PC-9 (cell line): ENCODE measurements at regions of chr1 and their contacts with region 1.

Region 1: GRCh38 chr1:179129702-179130473 is 48.0 kb downstream of the TOR3A start:
- DNase-seq: no peak
- H3K4me3 ChIP-seq: no peak overlapping the region
- H3K27ac ChIP-seq: peak overlapping the region; percentile 99
- H3K4me1 ChIP-seq: peaks cover 35% of the 10 kb centered on the region
- H3K27me3 ChIP-seq: no peaks in the 10 kb centered on the region
- CTCF ChIP-seq: no peak

Region 2: GRCh38 chr1:179142889-179143299 is 13.0 kb after region 1 on chr1:
- CTCF ChIA-PET with region 1: no interaction called
- POLR2A ChIA-PET with region 1: no interaction called
- intact Hi-C with region 1: loop called (anchors 2 kb)
- DNase-seq: peak; percentile 41 to 93
- H3K4me3 ChIP-seq: peak overlapping the region; percentile 55
- H3K27ac ChIP-seq: peak overlapping the region; percentile 94
- H3K4me1 ChIP-seq: peaks cover 49% of the 10 kb centered on the region
- H3K27me3 ChIP-seq: no peaks in the 10 kb centered on the region
- CTCF ChIP-seq: no peak

Region 3: GRCh38 chr1:179164494-179164893 is 34.6 kb after region 1 on chr1:
- CTCF ChIA-PET with region 1: no interaction called
- POLR2A ChIA-PET with region 1: no interaction called
- intact Hi-C with region 1: loop called (anchors 2 kb)
- DNase-seq: peak in 1 of 2 experiments; percentile 83
- H3K4me3 ChIP-seq: no peak overlapping the region
- H3K27ac ChIP-seq: peak overlapping the region; percentile 71
- H3K4me1 ChIP-seq: peaks cover 20% of the 10 kb centered on the region
- H3K27me3 ChIP-seq: no peaks in the 10 kb centered on the region
- CTCF ChIP-seq: no peak

Region 4: DNA sequence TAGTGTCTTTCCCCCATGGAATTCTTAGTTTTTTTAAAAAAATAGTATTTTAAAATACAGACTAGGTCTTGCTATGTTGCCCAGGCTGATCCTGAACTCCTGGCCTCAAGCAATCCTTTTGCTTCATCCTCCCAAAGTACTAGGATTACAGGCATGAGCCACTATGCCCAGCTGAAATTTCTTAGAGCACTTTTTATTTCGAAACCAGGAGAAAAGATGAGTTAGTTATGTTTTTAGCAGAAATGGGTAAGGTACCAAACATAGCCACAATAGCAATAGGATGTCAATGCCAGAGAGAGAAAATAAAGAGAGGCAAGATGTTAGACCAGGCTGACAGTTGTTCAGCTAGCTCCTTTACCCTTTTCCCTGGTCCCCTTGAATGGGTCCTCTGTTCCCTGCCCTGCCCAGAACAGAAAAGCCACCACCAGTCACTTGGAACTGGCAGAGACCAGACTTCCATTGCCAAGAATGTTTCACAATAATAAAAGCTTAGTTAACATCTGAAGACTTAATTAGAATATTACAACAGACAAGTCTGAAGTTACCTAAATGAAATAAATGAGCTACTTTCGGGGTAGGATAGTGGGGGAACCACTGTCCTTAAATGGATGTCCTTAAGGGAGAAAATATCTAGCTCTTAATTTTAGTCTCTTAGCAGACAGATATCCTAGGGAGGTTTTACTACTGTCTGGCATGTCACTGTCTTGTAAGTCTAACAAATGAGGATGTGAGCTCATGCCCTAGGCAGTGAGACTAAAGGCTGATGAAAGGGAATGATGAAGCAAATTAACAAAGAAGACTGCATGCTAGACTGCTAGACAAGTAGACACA is 45.3 kb after region 1 on chr1:
- CTCF ChIA-PET with region 1: interaction called, 6 read pairs
- POLR2A ChIA-PET with region 1: no interaction called
- intact Hi-C with region 1: loop called (anchors 5 kb)
- DNase-seq: peak in 1 of 2 experiments; percentile 64
- H3K4me3 ChIP-seq: no peak overlapping the region
- H3K27ac ChIP-seq: peak overlapping the region; percentile 65
- H3K4me1 ChIP-seq: peaks cover 18% of the 10 kb centered on the region; the same call in 1 of the 2 replicates
- H3K27me3 ChIP-seq: no peaks in the 10 kb centered on the region
- CTCF ChIP-seq: no peak